GM13976 (cell line): ENCODE measurements at regions of chr13 and their contacts with region 1.

Region 1: GRCh38 chr13:32315238-32316027 is at the starts of genes BRCA2 and ZAR1L:
- DNase-seq: peak; percentile 89
- CTCF ChIP-seq: no peak

Region 2: GRCh38 chr13:31909864-31910551 is 405.4 kb before region 1 on chr13:
- in situ Hi-C with region 1: loop called (anchors 10 kb)
- DNase-seq: no peak
- CTCF ChIP-seq: peak; percentile 82

Region 3: GRCh38 chr13:32019612-32020233 is 295.7 kb before region 1 on chr13:
- in situ Hi-C with region 1: loop called (anchors 10 kb)
- DNase-seq: peak; percentile 62
- CTCF ChIP-seq: peak; percentile 64

Region 4: DNA sequence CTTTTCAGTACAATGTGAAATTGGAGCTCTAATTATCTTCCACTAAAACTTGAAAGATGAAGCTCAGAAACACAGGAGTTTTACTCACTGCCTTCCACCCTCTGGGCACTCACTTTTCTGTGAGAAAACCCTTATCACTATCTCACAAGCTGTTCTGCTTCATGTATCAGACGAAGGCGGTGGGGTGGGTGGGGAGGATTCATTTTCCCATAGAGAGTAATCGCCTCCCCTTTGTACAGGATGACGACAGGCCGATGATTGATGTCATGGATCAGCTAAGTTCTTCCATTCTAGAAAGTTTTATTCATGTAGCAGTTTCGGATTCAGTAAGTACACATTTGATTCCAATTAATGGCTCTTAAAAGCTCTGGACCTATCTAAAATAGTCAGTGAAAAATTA is 140.1 kb before region 1 on chr13:
- in situ Hi-C with region 1: no loop called
- DNase-seq: no peak
- CTCF ChIP-seq: no peak